ENCODE measurements at regions of chr18 and their contacts with region 1.

Region 1: DNA sequence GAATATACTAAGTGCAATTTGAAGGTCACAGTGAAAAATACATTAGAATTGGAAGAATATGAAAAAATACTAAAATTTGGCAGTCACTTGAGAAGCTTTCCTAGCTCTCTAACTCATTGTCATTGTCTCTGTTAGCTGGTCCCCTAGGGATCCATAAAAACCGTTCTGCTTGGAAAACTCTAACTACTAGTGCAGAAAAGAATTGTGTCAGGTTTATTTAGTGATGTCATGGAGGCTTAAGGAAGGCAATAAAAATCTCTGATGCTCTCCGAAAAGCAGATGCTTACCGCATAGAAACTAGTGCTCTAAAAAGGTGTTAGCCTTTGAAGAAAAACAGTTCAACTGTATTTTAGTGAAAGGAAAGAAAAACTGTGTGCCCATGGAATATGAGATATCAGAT is 150.1 kb upstream of the DLGAP1 start:
- DNase-seq: no peak
- ATAC-seq: no peak
- H3K4me3 ChIP-seq: no peak overlapping the region
- H3K27ac ChIP-seq: no peak overlapping the region
- H3K4me1 ChIP-seq: no peaks in the 10 kb centered on the region
- H3K27me3 ChIP-seq: no peaks in the 10 kb centered on the region
- CTCF ChIP-seq: no peak

Region 2: GRCh38 chr18:5268874-5269273 is 663.7 kb after region 1 on chr18:
- intact Hi-C with region 1: loop called in 1 of 10 experiments (anchors 5 kb)
- DNase-seq: no peak
- ATAC-seq: no peak
- H3K4me3 ChIP-seq: no peak overlapping the region
- H3K27ac ChIP-seq: no peak overlapping the region
- H3K4me1 ChIP-seq: no peaks in the 10 kb centered on the region
- H3K27me3 ChIP-seq: no peaks in the 10 kb centered on the region
- CTCF ChIP-seq: no peak

Measured in heart right ventricle (tissue), 16 donors.